AG04450 (cell line): ENCODE measurements at regions of chr6 and their contacts with region 1.

Region 1: GRCh38 chr6:118825661-118826060 is 68.3 kb upstream of the ASF1A start:
- DNase-seq: no peak
- H3K4me3 ChIP-seq: no peak overlapping the region
- H3K27ac ChIP-seq: no peak overlapping the region
- H3K27me3 ChIP-seq: no peaks in the 10 kb centered on the region
- CTCF ChIP-seq: no peak

Region 2: DNA sequence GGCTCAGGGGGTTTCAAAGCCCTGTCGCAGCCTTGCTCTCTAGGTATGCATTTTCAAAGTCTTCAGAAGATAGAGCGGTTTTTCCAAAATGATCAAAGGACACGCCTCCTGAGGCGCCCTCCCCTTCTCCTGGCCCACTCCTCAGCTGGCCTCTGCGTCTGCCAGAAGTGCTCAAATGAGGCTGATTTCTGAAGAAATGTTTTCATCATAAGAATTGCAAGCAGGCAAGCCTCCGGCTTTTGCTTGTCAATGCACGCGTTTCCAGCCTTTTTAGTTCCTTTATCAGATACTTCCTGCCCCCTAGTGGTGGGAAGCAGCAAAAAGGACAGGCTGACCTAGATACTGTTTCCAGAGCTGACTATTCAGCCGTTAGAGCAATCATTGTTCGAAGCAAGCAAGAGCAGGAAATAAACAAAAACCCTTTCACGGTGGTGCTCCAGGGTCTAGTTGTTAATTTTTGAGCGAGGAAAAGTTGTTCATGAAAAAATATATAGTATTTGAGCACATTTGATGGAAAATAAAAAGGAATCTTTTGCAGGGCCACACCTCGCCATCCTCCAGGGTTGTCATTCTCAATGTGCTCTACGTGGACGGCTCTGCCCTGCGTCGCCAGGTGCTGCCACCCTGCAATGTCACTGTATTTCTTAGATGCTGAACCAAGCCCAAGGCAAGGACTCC is 25.1 kb before region 1 on chr6:
- CTCF ChIA-PET with region 1: interaction called, 12 read pairs
- POLR2A ChIA-PET with region 1: no interaction called
- DNase-seq: peak; percentile 69
- H3K4me3 ChIP-seq: peak overlapping the region; percentile 31; the same call in 1 of the 2 replicates
- H3K27ac ChIP-seq: no peak overlapping the region
- H3K27me3 ChIP-seq: no peaks in the 10 kb centered on the region
- CTCF ChIP-seq: peak; percentile 96